Heart left ventricle (tissue), 16 donors: ENCODE measurements at regions of chr4 and their contacts with region 1.

Region 1: DNA sequence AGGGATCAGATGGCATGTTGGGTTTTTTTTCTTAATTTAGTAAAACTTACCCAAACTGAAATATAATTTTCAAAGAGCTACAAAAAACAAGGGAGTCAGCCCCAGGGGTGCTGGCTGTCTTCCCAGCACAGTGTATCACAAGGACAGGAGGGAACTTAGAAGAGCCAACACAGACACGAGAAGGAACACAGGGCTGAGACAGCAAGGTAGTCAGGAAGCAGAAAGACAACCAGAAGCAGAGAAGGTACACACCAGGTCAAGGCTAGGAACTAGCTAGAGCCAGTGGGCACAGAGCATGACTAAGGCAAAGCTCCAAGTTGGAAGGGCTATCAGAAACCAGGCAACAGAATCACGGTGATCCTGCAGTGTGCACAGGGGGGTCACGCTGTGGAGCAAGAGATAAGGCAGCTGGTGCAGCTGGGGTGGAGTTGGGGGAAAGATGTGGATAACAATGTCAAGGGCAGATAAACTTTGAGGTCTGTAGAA is 168.7 kb downstream of the NR3C2 start:
- DNase-seq: peak in 4 of 5 donors; percentile 35 to 65 (median 48)
- ATAC-seq: peak; percentile 81 to 92 (median 85)
- H3K4me3 ChIP-seq: no peak overlapping the region
- H3K27ac ChIP-seq: peak overlapping the region in 4 of 12 donors; percentile 9 to 48 (median 37)
- H3K4me1 ChIP-seq: peaks cover 0 to 47% (median 21%) of the 10 kb centered on the region in 12 donors
- H3K27me3 ChIP-seq: no peaks in the 10 kb centered on the region
- CTCF ChIP-seq: no peak
- POLR2A ChIP-seq: no peak

Region 2: GRCh38 chr4:147924604-147925412 is 348.7 kb before region 1 on chr4:
- intact Hi-C with region 1: no loop called
- DNase-seq: peak in 1 of 5 donors; percentile 20
- ATAC-seq: no peak
- H3K4me3 ChIP-seq: no peak overlapping the region
- H3K27ac ChIP-seq: no peak overlapping the region
- H3K4me1 ChIP-seq: peaks cover 0 to 25% (median 4%) of the 10 kb centered on the region in 12 donors
- H3K27me3 ChIP-seq: no peaks in the 10 kb centered on the region
- CTCF ChIP-seq: peak in 10 of 12 donors; percentile 23 to 57 (median 43)
- POLR2A ChIP-seq: no peak

Region 3: GRCh38 chr4:148056869-148057268 is 216.7 kb before region 1 on chr4:
- intact Hi-C with region 1: loop called in 1 of 10 experiments (anchors 10 kb)
- DNase-seq: peak in 4 of 5 donors; percentile 53 to 75 (median 59)
- ATAC-seq: peak in 3 of 4 donors; percentile 51 to 70 (median 53)
- H3K4me3 ChIP-seq: no peak overlapping the region
- H3K27ac ChIP-seq: peak overlapping the region in 4 of 12 donors; percentile 4 to 84 (median 14)
- H3K4me1 ChIP-seq: peaks cover 3 to 93% (median 67%) of the 10 kb centered on the region in 12 donors
- H3K27me3 ChIP-seq: no peaks in the 10 kb centered on the region
- CTCF ChIP-seq: peak in 7 of 12 donors; percentile 12 to 56 (median 36)
- POLR2A ChIP-seq: no peak

Region 4: GRCh38 chr4:148530114-148530513 is 256.6 kb after region 1 on chr4:
- intact Hi-C with region 1: no loop called
- DNase-seq: no peak
- ATAC-seq: no peak
- H3K4me3 ChIP-seq: no peak overlapping the region
- H3K27ac ChIP-seq: no peak overlapping the region
- H3K4me1 ChIP-seq: no peaks in the 10 kb centered on the region
- H3K27me3 ChIP-seq: no peaks in the 10 kb centered on the region
- CTCF ChIP-seq: no peak
- POLR2A ChIP-seq: no peak